T-cell (primary cell): ENCODE measurements at regions of chr4 and their contacts with region 1.

Region 1: GRCh38 chr4:163544407-163545038 is 50.0 kb downstream of the TMA16 start:
- DNase-seq: peak in 34 of 35 experiments; percentile 17 to 79 (median 44)
- ATAC-seq: peak; percentile 84 to 91 (median 86)
- H3K4me3 ChIP-seq: peak overlapping the region; percentile 36 to 46
- H3K4me3 Mint-ChIP-seq: no peak overlapping the region
- H3K27ac ChIP-seq: peak overlapping the region; percentile 24
- H3K27ac Mint-ChIP-seq: no peak overlapping the region
- H3K4me1 ChIP-seq: peaks cover 0 to 3% of the 10 kb centered on the region in 2 experiments
- H3K4me1 Mint-ChIP-seq: peaks cover 0 to 11% (median 11%) of the 10 kb centered on the region in 3 donors
- H3K27me3 ChIP-seq: no peaks in the 10 kb centered on the region
- H3K27me3 Mint-ChIP-seq: no peaks in the 10 kb centered on the region

Region 2: GRCh38 chr4:163484906-163485305 is 59.6 kb before region 1 on chr4:
- CTCF ChIA-PET with region 1: interaction called, 8 to 23 read pairs
- POLR2A ChIA-PET with region 1: no interaction called
- DNase-seq: peak in 31 of 35 experiments; percentile 6 to 77 (median 45)
- ATAC-seq: peak in 3 of 4 experiments; percentile 27 to 59 (median 56)
- H3K4me3 ChIP-seq: no peak overlapping the region
- H3K4me3 Mint-ChIP-seq: no peak overlapping the region
- H3K27ac ChIP-seq: no peak overlapping the region
- H3K27ac Mint-ChIP-seq: no peak overlapping the region
- H3K4me1 ChIP-seq: no peaks in the 10 kb centered on the region
- H3K4me1 Mint-ChIP-seq: peaks cover 0 to 7% (median 0%) of the 10 kb centered on the region in 3 donors
- H3K27me3 ChIP-seq: peaks cover 0 to 6% of the 10 kb centered on the region in 2 experiments
- H3K27me3 Mint-ChIP-seq: peaks cover 2 to 7% of the 10 kb centered on the region in 2 donors

Region 3: DNA sequence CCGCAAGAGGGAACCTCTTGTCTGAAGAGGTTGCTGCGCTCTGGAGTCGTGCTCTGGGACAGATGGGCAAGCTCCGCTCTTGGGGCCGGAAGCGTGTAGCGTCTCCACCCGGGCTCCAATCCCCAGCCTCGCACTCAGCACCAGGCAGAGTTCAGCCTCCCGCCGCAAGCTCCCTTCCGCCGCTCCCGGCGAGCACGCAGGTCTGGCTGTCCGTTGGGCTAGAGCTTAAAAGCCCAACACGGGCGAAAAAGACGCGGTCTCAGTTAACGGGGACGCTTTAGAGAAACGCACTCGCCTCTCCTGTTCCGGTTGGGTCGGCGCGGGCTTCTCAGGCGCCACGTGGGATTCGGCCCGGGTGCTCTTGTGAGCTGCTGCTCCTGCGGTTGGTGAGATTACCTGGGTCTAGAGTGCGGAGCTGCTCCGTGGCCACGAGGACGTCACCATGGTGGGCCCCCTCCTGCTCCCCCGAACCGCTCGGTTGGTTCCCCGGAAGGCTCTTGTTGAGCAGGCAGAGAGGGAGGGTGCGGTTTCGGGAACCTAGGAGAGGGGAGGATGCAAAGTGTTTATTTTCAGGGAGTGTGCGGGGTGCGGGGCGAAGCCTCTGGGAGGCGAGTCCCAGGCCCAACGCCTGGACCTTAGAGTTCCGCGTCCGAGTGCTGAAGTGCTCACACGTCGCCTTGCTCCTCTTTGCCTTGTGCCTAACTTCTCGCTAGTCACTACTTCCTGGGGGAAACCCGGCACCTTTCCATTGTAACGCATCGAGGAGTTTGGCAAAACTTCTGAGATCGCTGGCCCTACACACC is 50.0 kb before region 1 on chr4 and contains the start of gene TMA16:
- CTCF ChIA-PET with region 1: interaction called, 9 to 39 read pairs
- POLR2A ChIA-PET with region 1: no interaction called
- DNase-seq: peak; percentile 57 to 86 (median 70)
- ATAC-seq: peak; percentile 81 to 85 (median 82)
- H3K4me3 ChIP-seq: peak within 1 kb of the TSS; percentile 76 to 97
- H3K4me3 Mint-ChIP-seq: peak within 1 kb of the TSS; percentile 96 to 99 (median 96)
- H3K27ac ChIP-seq: peak within 1 kb of the TSS; percentile 56
- H3K27ac Mint-ChIP-seq: peak within 1 kb of the TSS; percentile 95 to 96
- H3K4me1 ChIP-seq: peaks cover 9 to 15% of the 10 kb centered on the region in 2 experiments
- H3K4me1 Mint-ChIP-seq: peaks cover 28 to 40% (median 35%) of the 10 kb centered on the region in 3 donors
- H3K27me3 ChIP-seq: no peaks in the 10 kb centered on the region
- H3K27me3 Mint-ChIP-seq: peaks cover 3% of the 10 kb centered on the region in 2 donors
- total RNA-seq, gene TMA16: 9.6 to 23.1 (median 19.7) TPM

Region 4: GRCh38 chr4:163681208-163681821 is 136.8 kb after region 1 on chr4:
- CTCF ChIA-PET with region 1: interaction called, 14 to 21 read pairs
- POLR2A ChIA-PET with region 1: no interaction called
- DNase-seq: peak in 12 of 35 experiments; percentile 0 to 78 (median 26)
- ATAC-seq: peak in 3 of 4 experiments; percentile 40 to 77 (median 49)
- H3K4me3 ChIP-seq: no peak overlapping the region
- H3K4me3 Mint-ChIP-seq: no peak overlapping the region
- H3K27ac ChIP-seq: no peak overlapping the region
- H3K27ac Mint-ChIP-seq: no peak overlapping the region
- H3K4me1 ChIP-seq: no peaks in the 10 kb centered on the region
- H3K4me1 Mint-ChIP-seq: peaks cover 1 to 5% (median 5%) of the 10 kb centered on the region in 3 donors
- H3K27me3 ChIP-seq: no peaks in the 10 kb centered on the region
- H3K27me3 Mint-ChIP-seq: peaks cover 0 to 3% of the 10 kb centered on the region in 2 donors

Region 5: DNA sequence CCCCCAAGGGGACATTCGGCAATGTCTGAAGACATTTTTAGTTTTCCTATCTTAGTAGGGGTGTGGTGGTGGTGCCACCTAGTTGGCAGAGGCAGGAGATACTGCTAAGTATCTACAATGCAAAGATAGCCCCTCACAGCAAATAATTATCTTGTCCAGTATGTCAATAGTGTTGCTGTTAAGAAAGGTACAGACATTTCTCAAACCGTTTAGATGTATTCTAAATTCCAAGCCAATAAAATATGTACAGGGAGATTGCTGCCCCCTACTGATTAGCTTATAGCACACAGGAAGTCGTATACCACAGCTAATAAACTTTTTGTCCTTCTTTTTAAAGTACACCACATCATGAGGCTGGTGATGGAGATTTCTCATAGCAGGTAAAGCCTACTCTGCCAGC is 210.5 kb after region 1 on chr4:
- CTCF ChIA-PET with region 1: interaction called, 5 to 10 read pairs
- POLR2A ChIA-PET with region 1: no interaction called
- DNase-seq: peak in 1 of 35 experiments; percentile 47
- ATAC-seq: peak in 3 of 4 experiments; percentile 46 to 53 (median 46)
- H3K4me3 ChIP-seq: no peak overlapping the region
- H3K4me3 Mint-ChIP-seq: no peak overlapping the region
- H3K27ac ChIP-seq: no peak overlapping the region
- H3K27ac Mint-ChIP-seq: no peak overlapping the region
- H3K4me1 ChIP-seq: no peaks in the 10 kb centered on the region
- H3K4me1 Mint-ChIP-seq: peaks cover 0 to 4% (median 2%) of the 10 kb centered on the region in 3 donors
- H3K27me3 ChIP-seq: no peaks in the 10 kb centered on the region
- H3K27me3 Mint-ChIP-seq: peaks cover 0 to 3% of the 10 kb centered on the region in 2 donors

Region 6: GRCh38 chr4:164012396-164013027 is 468.0 kb after region 1 on chr4:
- CTCF ChIA-PET with region 1: interaction called, 3 to 21 read pairs
- POLR2A ChIA-PET with region 1: no interaction called
- DNase-seq: peak in 16 of 35 experiments; percentile 0 to 60 (median 5)
- ATAC-seq: peak in 3 of 4 experiments; percentile 32 to 61 (median 43)
- H3K4me3 ChIP-seq: no peak overlapping the region
- H3K4me3 Mint-ChIP-seq: no peak overlapping the region
- H3K27ac ChIP-seq: no peak overlapping the region
- H3K27ac Mint-ChIP-seq: no peak overlapping the region
- H3K4me1 ChIP-seq: peaks cover 0 to 10% of the 10 kb centered on the region in 2 experiments
- H3K4me1 Mint-ChIP-seq: peaks cover 0 to 24% (median 4%) of the 10 kb centered on the region in 3 donors
- H3K27me3 ChIP-seq: no peaks in the 10 kb centered on the region
- H3K27me3 Mint-ChIP-seq: no peaks in the 10 kb centered on the region

Region 7: DNA sequence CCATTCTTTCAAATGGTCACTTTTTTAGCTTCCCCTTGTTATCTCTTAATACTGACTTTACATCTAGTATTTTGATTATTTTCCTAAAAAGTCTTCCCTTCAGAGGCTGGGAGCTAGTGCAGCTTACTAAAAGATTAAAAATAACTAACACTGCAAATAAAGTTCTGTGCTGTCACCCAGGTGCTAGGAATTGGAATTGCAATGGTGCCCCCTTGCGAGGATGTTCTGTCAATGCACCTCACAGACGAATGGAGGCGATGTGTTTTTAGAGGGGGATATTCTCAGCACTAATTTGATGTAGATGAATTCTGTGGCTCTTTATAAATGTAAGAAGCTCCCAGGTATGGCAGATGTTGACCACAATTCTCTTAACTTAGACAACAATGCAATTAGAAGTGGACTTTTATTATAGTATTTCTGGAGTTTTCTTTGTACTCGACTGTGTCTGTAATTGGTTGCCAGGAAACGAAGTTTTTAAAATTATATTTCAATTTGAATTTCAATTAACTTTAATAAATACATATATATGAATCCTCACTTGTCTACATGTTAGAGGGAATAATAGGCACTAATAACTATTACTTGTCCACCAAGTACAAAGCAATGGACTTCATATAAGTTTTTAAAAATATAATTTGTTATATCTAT is 1187.4 kb after region 1 on chr4:
- CTCF ChIA-PET with region 1: interaction called, 64 to 99 read pairs
- POLR2A ChIA-PET with region 1: no interaction called
- DNase-seq: peak in 32 of 35 experiments; percentile 5 to 63 (median 28)
- ATAC-seq: peak in 1 of 4 experiments; percentile 42
- H3K4me3 ChIP-seq: no peak overlapping the region
- H3K4me3 Mint-ChIP-seq: no peak overlapping the region
- H3K27ac ChIP-seq: no peak overlapping the region
- H3K27ac Mint-ChIP-seq: no peak overlapping the region
- H3K4me1 ChIP-seq: no peaks in the 10 kb centered on the region
- H3K4me1 Mint-ChIP-seq: no peaks in the 10 kb centered on the region
- H3K27me3 ChIP-seq: peaks cover 0 to 2% of the 10 kb centered on the region in 2 experiments
- H3K27me3 Mint-ChIP-seq: peaks cover 0 to 5% of the 10 kb centered on the region in 2 donors